ENCODE measurements at regions of chr7 and their contacts with region 1.

Region 1: GRCh38 chr7:8418629-8419245 is 14.7 kb upstream of the NXPH1 start:
- H3K4me3 Mint-ChIP-seq: no peak overlapping the region
- H3K27ac Mint-ChIP-seq: no peak overlapping the region
- H3K4me1 Mint-ChIP-seq: no peaks in the 10 kb centered on the region
- H3K27me3 Mint-ChIP-seq: no peaks in the 10 kb centered on the region

Region 2: GRCh38 chr7:8035647-8036518 is 382.9 kb before region 1 on chr7:
- intact Hi-C with region 1: no loop called
- H3K4me3 Mint-ChIP-seq: no peak overlapping the region
- H3K27ac Mint-ChIP-seq: no peak overlapping the region
- H3K4me1 Mint-ChIP-seq: no peaks in the 10 kb centered on the region
- H3K27me3 Mint-ChIP-seq: no peaks in the 10 kb centered on the region

Region 3: GRCh38 chr7:8724080-8724718 is 305.5 kb after region 1 on chr7:
- intact Hi-C with region 1: loop called (anchors 5 kb)
- H3K4me3 Mint-ChIP-seq: no peak overlapping the region
- H3K27ac Mint-ChIP-seq: no peak overlapping the region
- H3K4me1 Mint-ChIP-seq: no peaks in the 10 kb centered on the region
- H3K27me3 Mint-ChIP-seq: no peaks in the 10 kb centered on the region

Region 4: DNA sequence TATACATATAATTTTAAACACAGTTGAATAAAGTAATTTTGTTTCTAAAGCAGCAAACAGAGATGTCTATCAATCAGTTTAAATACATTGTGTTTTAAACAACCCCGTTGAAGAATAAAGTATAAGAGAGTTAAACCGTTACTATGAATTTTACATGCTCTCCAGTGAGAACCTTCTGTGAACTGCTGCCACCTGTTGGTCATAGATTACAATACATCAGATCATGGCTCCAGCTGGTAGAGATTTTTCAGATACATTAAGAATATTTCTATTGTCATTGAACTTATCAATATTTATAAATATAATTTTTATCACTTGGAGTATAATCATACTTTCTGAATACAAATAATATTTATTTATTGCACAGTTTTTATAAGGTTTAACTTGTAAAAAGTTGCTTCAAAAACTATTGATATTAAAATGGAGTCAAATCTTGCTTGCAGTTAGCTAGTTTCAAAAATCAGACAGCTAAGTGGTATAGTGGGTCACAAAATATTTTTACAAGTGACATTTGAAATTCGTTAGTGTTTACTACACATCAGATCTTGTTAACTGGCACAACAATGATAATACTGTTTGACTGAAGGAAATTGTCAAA is 1993.8 kb after region 1 on chr7:
- intact Hi-C with region 1: loop called (anchors 2 kb)
- H3K4me3 Mint-ChIP-seq: no peak overlapping the region
- H3K27ac Mint-ChIP-seq: no peak overlapping the region
- H3K4me1 Mint-ChIP-seq: no peaks in the 10 kb centered on the region
- H3K27me3 Mint-ChIP-seq: no peaks in the 10 kb centered on the region

Measured in dendritic cell treated with granulocyte-macrophage colony-stimulating factor and Interleukin-4, amounts not matched to agents 40 ng/mL and 50 ng/mL, for 4 days (primary cell).